CD4-positive, alpha-beta memory T cell (primary cell): ENCODE measurements at regions of chr22 and their contacts with region 1.

Region 1: DNA sequence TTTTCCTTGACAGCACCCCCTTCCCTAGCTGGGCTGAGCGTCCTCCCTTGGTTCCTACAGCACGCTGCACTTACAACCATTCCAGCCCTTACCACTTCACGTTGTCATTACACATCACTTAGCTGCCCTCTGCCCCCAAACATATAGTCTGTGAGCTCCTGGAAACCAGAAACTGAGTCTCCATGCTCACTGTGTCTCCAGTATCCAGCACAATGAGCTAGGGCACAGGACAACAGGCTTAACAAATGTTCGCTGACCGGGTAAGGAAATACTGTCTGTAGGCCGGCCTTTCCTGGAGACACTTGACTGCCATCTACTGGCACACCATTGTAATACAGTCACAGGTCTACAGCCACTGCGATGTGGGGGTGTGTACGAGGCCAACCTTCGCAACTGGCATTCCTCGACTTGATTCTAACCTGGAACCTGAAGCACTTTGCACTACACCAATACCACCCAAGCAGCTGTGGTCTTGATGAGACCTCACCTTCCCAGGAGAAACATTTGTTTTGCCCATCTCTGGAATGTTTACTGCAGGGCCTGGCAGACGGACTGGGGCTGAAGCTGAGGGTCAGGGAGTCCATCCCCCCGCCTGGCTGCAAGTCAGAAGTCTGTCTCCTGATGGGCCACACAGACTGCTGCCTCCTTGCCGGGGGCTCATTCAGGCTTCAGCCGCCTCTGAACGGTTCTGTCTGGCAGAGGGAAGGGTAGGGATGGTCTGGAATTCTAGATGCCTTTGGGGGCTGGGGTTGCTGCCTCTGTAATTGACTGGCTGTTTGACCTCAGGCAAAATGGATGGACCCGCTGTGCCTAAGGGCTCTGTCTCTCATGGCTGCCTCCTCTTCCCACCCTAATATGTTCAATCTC is 72.0 kb downstream of the SYN3 start:
- DNase-seq: peak in 4 of 5 donors; percentile 7 to 17 (median 14)
- H3K4me3 ChIP-seq: no peak overlapping the region
- H3K4me3 Mint-ChIP-seq: no peak overlapping the region
- H3K27ac ChIP-seq: no peak overlapping the region
- H3K27ac Mint-ChIP-seq: no peak overlapping the region
- H3K4me1 ChIP-seq: no peaks in the 10 kb centered on the region
- H3K4me1 Mint-ChIP-seq: peaks cover 0 to 4% (median 0%) of the 10 kb centered on the region in 4 donors
- H3K27me3 ChIP-seq: no peaks in the 10 kb centered on the region
- H3K27me3 Mint-ChIP-seq: peaks cover 0 to 2% of the 10 kb centered on the region in 2 donors

Region 2: DNA sequence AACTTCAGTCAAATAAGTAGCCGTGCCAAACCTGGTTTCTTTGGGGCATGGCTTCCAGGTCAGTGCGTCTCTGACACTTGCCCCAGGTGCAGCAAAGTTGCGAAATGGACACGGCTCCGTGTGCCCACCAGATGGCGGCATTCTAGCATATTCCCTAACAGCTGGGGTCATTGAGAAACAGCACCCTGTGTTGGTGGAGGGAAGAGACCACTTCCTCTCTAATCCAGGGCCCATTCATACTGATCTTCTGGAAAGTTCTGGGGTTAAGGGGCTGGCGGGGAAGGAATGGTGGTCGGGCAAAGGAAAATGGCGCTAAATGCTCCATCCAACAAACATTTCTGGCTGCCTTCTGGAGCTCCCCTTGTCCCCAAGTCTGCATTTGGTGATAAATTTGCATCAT is 325.8 kb before region 1 on chr22:
- CTCF ChIA-PET with region 1: no interaction called
- POLR2A ChIA-PET with region 1: no interaction called
- intact Hi-C with region 1: loop called (anchors 2 kb)
- DNase-seq: peak in 4 of 5 donors; percentile 24 to 37 (median 28)
- H3K4me3 ChIP-seq: no peak overlapping the region
- H3K4me3 Mint-ChIP-seq: no peak overlapping the region
- H3K27ac ChIP-seq: no peak overlapping the region
- H3K27ac Mint-ChIP-seq: no peak overlapping the region
- H3K4me1 ChIP-seq: no peaks in the 10 kb centered on the region
- H3K4me1 Mint-ChIP-seq: no peaks in the 10 kb centered on the region
- H3K27me3 ChIP-seq: no peaks in the 10 kb centered on the region
- H3K27me3 Mint-ChIP-seq: peaks cover 7% of the 10 kb centered on the region in 2 donors

Region 3: GRCh38 chr22:33105501-33105911 is 119.4 kb after region 1 on chr22:
- CTCF ChIA-PET with region 1: no interaction called
- POLR2A ChIA-PET with region 1: no interaction called
- intact Hi-C with region 1: no loop called
- DNase-seq: no peak
- H3K4me3 ChIP-seq: no peak overlapping the region
- H3K4me3 Mint-ChIP-seq: no peak overlapping the region
- H3K27ac ChIP-seq: no peak overlapping the region
- H3K27ac Mint-ChIP-seq: no peak overlapping the region
- H3K4me1 ChIP-seq: no peaks in the 10 kb centered on the region
- H3K4me1 Mint-ChIP-seq: no peaks in the 10 kb centered on the region
- H3K27me3 ChIP-seq: no peaks in the 10 kb centered on the region
- H3K27me3 Mint-ChIP-seq: peaks cover 3% of the 10 kb centered on the region in 2 donors